ENCODE measurements at regions of chr1 and their contacts with region 1.

Region 1: GRCh38 chr1:182054698-182055326 is 6.7 kb downstream of the ZNF648 start:
- DNase-seq: peak; percentile 15
- H3K4me3 ChIP-seq: no peak overlapping the region
- H3K27ac ChIP-seq: no peak overlapping the region
- H3K4me1 ChIP-seq: no peaks in the 10 kb centered on the region
- H3K27me3 ChIP-seq: no peaks in the 10 kb centered on the region
- CTCF ChIP-seq: peak; percentile 28
- POLR2A ChIP-seq: no peak

Region 2: GRCh38 chr1:181479137-181479745 is 575.6 kb before region 1 on chr1:
- CTCF ChIA-PET with region 1: interaction called, 27 read pairs
- POLR2A ChIA-PET with region 1: no interaction called
- dilution Hi-C with region 1: no loop called
- intact Hi-C with region 1: loop called (anchors 1 kb)
- DNase-seq: peak; percentile 49
- H3K4me3 ChIP-seq: no peak overlapping the region
- H3K27ac ChIP-seq: no peak overlapping the region
- H3K4me1 ChIP-seq: no peaks in the 10 kb centered on the region
- H3K27me3 ChIP-seq: peaks cover 21 to 30% of the 10 kb centered on the region in 2 experiments
- CTCF ChIP-seq: peak; percentile 60 to 61
- POLR2A ChIP-seq: no peak

Region 3: GRCh38 chr1:182069028-182069466 is 14.2 kb after region 1 on chr1:
- CTCF ChIA-PET with region 1: interaction called, 13 read pairs
- POLR2A ChIA-PET with region 1: no interaction called
- dilution Hi-C with region 1: no loop called
- intact Hi-C with region 1: no loop called
- DNase-seq: peak; percentile 26
- H3K4me3 ChIP-seq: no peak overlapping the region
- H3K27ac ChIP-seq: no peak overlapping the region
- H3K4me1 ChIP-seq: no peaks in the 10 kb centered on the region
- H3K27me3 ChIP-seq: no peaks in the 10 kb centered on the region
- CTCF ChIP-seq: peak; percentile 47 to 85
- POLR2A ChIP-seq: no peak

Measured in endothelial cell of umbilical vein (primary cell).